Mammary epithelial cell (primary cell): ENCODE measurements at regions of chr13 and their contacts with region 1.

Region 1: DNA sequence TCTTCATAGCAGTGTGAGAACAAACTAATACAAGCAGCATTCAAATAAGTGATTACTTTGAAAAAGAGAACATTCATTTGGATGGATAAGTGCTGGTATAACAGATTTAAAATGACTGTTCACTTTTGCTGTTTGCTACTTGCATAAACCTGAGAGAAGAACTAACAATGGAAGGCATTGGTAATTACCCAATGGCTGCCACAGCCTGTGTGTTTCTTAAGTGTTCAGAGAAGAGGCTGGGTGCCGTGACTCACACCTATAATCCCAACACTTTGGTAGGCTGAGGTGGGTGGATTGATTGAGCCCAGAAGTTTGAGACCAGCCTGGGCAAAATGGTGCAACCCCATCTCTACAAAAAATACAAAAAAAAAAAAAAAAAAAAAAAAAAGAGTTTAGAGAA is 4.9 kb upstream of the TEX26 start:
- DNase-seq: peak; percentile 55
- H3K4me3 ChIP-seq: no peak overlapping the region
- H3K27ac ChIP-seq: no peak overlapping the region
- H3K4me1 ChIP-seq: peaks cover 4% of the 10 kb centered on the region
- H3K27me3 ChIP-seq: no peaks in the 10 kb centered on the region
- CTCF ChIP-seq: no peak

Region 2: GRCh38 chr13:30892966-30893365 is 34.6 kb before region 1 on chr13:
- CTCF ChIA-PET with region 1: no interaction called
- dilution Hi-C with region 1: loop called (anchors 5 kb)
- in situ Hi-C with region 1: no loop called
- intact Hi-C with region 1: no loop called
- DNase-seq: no peak
- H3K4me3 ChIP-seq: no peak overlapping the region
- H3K27ac ChIP-seq: no peak overlapping the region
- H3K4me1 ChIP-seq: peaks cover 3% of the 10 kb centered on the region
- H3K27me3 ChIP-seq: no peaks in the 10 kb centered on the region
- CTCF ChIP-seq: peak; percentile 58 to 71

Region 3: GRCh38 chr13:31022288-31022895 is 94.8 kb after region 1 on chr13:
- CTCF ChIA-PET with region 1: no interaction called
- dilution Hi-C with region 1: loop called (anchors 5 kb)
- in situ Hi-C with region 1: no loop called
- intact Hi-C with region 1: no loop called
- DNase-seq: no peak
- H3K4me3 ChIP-seq: no peak overlapping the region
- H3K27ac ChIP-seq: no peak overlapping the region
- H3K4me1 ChIP-seq: peaks cover 5% of the 10 kb centered on the region
- H3K27me3 ChIP-seq: no peaks in the 10 kb centered on the region
- CTCF ChIP-seq: no peak